GM10248 (cell line): ENCODE measurements at regions of chr12 and their contacts with region 1.

Region 1: DNA sequence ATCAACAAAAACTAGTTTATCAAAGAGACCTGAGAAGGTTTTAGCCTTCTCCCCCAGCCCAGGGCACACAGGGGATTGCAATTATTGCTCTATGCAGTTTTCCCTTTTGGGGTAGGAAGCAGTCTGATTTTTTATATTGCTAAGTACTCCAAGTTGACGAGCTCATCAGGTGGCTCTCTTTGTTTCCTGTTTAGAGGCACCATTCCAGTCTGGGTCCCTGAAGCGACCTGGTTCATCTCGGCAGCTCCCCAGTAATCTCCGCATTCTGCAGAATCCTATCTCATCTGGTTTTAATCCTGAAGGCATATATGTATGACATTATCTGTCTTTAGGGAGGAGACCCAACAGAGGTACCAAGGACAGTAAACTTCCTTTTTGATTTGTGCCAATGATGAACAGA is 56.3 kb downstream of the BHLHE41 start:
- DNase-seq: no peak
- CTCF ChIP-seq: no peak

Region 2: GRCh38 chr12:25723921-25724491 is 344.5 kb before region 1 on chr12:
- CTCF ChIA-PET with region 1: no interaction called
- POLR2A ChIA-PET with region 1: no interaction called
- DNase-seq: no peak
- CTCF ChIP-seq: no peak

Region 3: GRCh38 chr12:26058308-26058707 is 10.2 kb before region 1 on chr12:
- CTCF ChIA-PET with region 1: interaction called, 11 read pairs
- POLR2A ChIA-PET with region 1: no interaction called
- DNase-seq: peak; percentile 13
- CTCF ChIP-seq: no peak